Heart right ventricle (tissue), 16 donors: ENCODE measurements at regions of chr9 and their contacts with region 1.

Region 1: GRCh38 chr9:36632892-36633291 is 60.2 kb downstream of the MELK start:
- DNase-seq: no peak
- ATAC-seq: no peak
- H3K4me3 ChIP-seq: no peak overlapping the region
- H3K27ac ChIP-seq: no peak overlapping the region
- H3K4me1 ChIP-seq: no peaks in the 10 kb centered on the region
- H3K27me3 ChIP-seq: no peaks in the 10 kb centered on the region
- CTCF ChIP-seq: peak in 7 of 9 donors; percentile 40 to 62 (median 51)

Region 2: DNA sequence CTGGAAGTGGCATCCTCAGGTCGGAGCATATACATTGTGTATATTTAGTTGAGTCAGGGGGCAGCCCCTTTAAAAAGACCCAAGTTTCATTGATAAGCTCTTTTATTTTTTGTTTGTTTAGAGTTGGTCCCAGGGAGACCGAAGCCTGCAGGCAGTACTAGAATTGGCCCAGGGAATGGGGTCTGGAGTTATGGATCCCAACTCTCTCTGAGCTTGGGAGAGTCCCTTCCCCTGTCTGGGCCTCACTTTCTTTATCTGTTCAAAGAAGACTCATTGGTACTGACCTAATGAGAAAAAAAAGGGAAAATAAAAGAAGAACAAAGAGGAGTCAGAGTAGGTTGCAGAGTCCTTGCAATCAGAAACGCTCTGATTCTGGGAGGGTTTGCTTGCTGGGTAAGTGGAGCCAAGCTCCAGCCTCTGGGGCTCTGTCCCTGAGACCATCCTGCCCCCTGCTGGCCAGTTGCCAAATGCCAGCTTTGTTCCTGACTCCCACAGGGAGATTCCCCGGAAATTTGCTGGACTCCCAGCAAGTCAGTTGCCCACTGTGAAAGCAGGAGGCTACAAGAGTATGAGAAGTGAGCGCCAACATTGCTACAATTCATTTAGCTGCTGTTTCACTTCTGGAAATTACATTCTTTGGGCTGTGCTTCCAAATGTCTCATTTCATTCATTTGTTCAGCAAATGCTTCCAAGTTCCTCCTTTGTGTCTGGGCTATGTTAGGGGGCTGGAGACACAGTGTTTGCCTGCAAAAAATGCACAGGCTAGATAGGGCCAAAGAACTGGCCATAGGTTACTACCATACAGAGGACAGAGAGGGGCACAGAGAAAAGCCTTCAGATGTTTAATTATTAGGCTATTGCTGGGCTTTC is 96.0 kb after region 1 on chr9:
- intact Hi-C with region 1: loop called in 1 of 10 experiments (anchors 10 kb)
- DNase-seq: peak in 1 of 2 donors; percentile 35
- ATAC-seq: peak in 1 of 8 donors; percentile 29
- H3K4me3 ChIP-seq: no peak overlapping the region
- H3K27ac ChIP-seq: no peak overlapping the region
- H3K4me1 ChIP-seq: no peaks in the 10 kb centered on the region
- H3K27me3 ChIP-seq: peaks cover 0 to 10% (median 5%) of the 10 kb centered on the region in 7 donors
- CTCF ChIP-seq: peak in 8 of 9 donors; percentile 11 to 70 (median 36)